PC-9 (cell line): ENCODE measurements at regions of chr1 and their contacts with region 1.

Region 1: DNA sequence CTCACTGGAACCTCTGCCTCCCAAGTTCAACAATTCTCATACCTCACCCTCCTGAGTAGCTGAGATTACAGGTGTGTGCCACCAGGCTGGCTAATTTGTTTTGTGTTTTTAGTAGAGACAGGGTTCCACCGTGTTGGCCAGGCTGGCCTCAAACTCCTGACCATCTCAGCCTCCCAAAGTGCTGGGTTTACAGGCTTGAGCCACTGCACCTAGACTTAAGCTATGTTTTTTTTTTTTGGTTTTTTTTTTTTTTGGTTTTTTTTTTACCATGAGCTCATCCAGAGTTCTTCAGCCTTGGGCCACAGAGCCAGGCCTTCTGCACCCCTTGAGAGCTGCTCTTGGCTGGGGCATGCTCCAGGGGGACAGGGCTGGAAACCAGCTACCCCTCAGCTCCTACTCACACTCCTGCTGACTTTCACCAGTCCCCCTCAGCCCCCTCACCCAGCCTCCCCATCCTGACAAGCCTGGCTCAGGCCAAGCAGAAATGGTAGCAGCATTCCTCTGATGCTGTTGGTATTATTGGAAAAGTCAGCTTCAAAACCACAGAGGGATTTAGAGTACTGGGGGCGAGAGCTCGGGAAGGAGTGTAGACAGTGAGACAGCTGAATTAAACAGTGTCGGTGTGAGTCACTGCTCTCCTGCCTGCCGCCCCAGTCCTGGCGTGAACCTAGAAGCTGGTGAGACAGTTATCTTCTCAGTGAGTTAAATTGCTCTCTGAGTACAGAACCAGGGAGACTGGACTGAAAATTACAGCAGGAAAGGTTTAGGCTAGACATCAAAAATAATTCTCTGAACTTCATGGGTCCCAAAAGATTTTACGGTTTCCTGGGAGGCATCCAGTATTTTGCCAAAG is 63.7 kb downstream of the NAV1 start:
- DNase-seq: peak in 1 of 2 experiments; percentile 17
- H3K4me3 ChIP-seq: no peak overlapping the region
- H3K27ac ChIP-seq: no peak overlapping the region
- H3K4me1 ChIP-seq: no peaks in the 10 kb centered on the region
- H3K27me3 ChIP-seq: no peaks in the 10 kb centered on the region
- CTCF ChIP-seq: no peak

Region 2: GRCh38 chr1:201573923-201574322 is 28.7 kb before region 1 on chr1:
- CTCF ChIA-PET with region 1: interaction called, 11 read pairs
- POLR2A ChIA-PET with region 1: no interaction called
- intact Hi-C with region 1: no loop called
- DNase-seq: no peak
- H3K4me3 ChIP-seq: no peak overlapping the region
- H3K27ac ChIP-seq: no peak overlapping the region
- H3K4me1 ChIP-seq: no peaks in the 10 kb centered on the region
- H3K27me3 ChIP-seq: no peaks in the 10 kb centered on the region
- CTCF ChIP-seq: no peak